ENCODE measurements at regions of chr11 and their contacts with region 1.

Region 1: GRCh38 chr11:108672113-108672512 is 7.2 kb downstream of the DDX10 start:
- DNase-seq: no peak
- H3K4me3 ChIP-seq: no peak overlapping the region
- H3K27me3 ChIP-seq: no peaks in the 10 kb centered on the region
- CTCF ChIP-seq: no peak

Region 2: GRCh38 chr11:107853070-107853469 is 819.0 kb before region 1 on chr11:
- CTCF ChIA-PET with region 1: no interaction called
- POLR2A ChIA-PET with region 1: interaction called, 24 read pairs
- DNase-seq: no peak
- H3K4me3 ChIP-seq: no peak overlapping the region
- H3K27me3 ChIP-seq: no peaks in the 10 kb centered on the region
- CTCF ChIP-seq: no peak

Region 3: DNA sequence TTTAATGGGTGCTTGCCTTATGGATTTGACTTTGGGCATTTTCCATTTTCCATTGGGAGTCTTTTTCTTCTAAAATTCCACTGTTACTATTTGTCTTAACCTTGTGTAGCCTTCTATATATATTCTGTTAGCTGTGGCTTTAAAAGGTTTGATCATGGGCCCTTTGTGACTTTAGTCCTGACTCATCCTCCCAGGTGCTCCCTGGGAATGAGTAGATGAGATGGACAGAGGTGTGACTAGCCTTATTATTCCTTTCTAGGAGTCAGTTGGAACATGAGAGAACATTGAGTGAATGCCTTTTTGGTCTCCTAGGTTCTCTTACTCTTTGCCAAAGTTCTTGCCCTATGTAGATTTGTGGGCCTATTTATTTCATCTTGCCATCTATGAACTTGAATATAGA is 31.8 kb after region 1 on chr11:
- CTCF ChIA-PET with region 1: no interaction called
- POLR2A ChIA-PET with region 1: no interaction called
- DNase-seq: no peak
- H3K4me3 ChIP-seq: no peak overlapping the region
- H3K27me3 ChIP-seq: no peaks in the 10 kb centered on the region
- CTCF ChIP-seq: no peak

Measured in BJ (cell line).